CD4-positive, alpha-beta memory T cell (primary cell): ENCODE measurements at regions of chr18 and their contacts with region 1.

Region 1: GRCh38 chr18:29351171-29351570 is 1174.2 kb upstream of the CDH2 start:
- DNase-seq: no peak
- H3K4me3 ChIP-seq: no peak overlapping the region
- H3K4me3 Mint-ChIP-seq: no peak overlapping the region
- H3K27ac ChIP-seq: no peak overlapping the region
- H3K27ac Mint-ChIP-seq: no peak overlapping the region
- H3K4me1 ChIP-seq: no peaks in the 10 kb centered on the region
- H3K4me1 Mint-ChIP-seq: no peaks in the 10 kb centered on the region
- H3K27me3 ChIP-seq: no peaks in the 10 kb centered on the region
- H3K27me3 Mint-ChIP-seq: no peaks in the 10 kb centered on the region

Region 2: DNA sequence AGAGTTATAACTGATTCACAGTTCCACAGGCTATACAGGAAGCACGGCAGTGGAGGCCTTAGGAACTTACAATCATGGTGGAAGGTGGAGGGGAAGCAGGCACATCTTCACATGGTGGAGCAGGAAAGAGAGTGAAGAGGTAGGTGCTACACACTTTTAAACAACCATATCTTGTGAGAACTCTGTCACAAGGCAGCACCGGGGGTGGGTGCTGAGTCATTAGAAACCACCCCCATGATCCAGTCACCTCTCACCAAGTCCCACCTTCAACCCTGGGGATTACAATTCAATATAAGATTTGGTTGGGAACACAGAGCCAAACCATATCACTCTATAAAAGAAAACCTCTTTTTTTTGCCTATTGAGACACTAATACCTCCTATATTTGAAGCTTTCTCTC is 65.7 kb before region 1 on chr18:
- CTCF ChIA-PET with region 1: no interaction called
- POLR2A ChIA-PET with region 1: no interaction called
- intact Hi-C with region 1: loop called (anchors 10 kb)
- DNase-seq: no peak
- H3K4me3 ChIP-seq: no peak overlapping the region
- H3K4me3 Mint-ChIP-seq: no peak overlapping the region
- H3K27ac ChIP-seq: no peak overlapping the region
- H3K27ac Mint-ChIP-seq: no peak overlapping the region
- H3K4me1 ChIP-seq: no peaks in the 10 kb centered on the region
- H3K4me1 Mint-ChIP-seq: no peaks in the 10 kb centered on the region
- H3K27me3 ChIP-seq: no peaks in the 10 kb centered on the region
- H3K27me3 Mint-ChIP-seq: no peaks in the 10 kb centered on the region

Region 3: GRCh38 chr18:29418136-29418535 is 67.0 kb after region 1 on chr18:
- CTCF ChIA-PET with region 1: no interaction called
- POLR2A ChIA-PET with region 1: no interaction called
- intact Hi-C with region 1: no loop called
- DNase-seq: no peak
- H3K4me3 ChIP-seq: no peak overlapping the region
- H3K4me3 Mint-ChIP-seq: no peak overlapping the region
- H3K27ac ChIP-seq: no peak overlapping the region
- H3K27ac Mint-ChIP-seq: no peak overlapping the region
- H3K4me1 ChIP-seq: no peaks in the 10 kb centered on the region
- H3K4me1 Mint-ChIP-seq: no peaks in the 10 kb centered on the region
- H3K27me3 ChIP-seq: no peaks in the 10 kb centered on the region
- H3K27me3 Mint-ChIP-seq: no peaks in the 10 kb centered on the region

Region 4: DNA sequence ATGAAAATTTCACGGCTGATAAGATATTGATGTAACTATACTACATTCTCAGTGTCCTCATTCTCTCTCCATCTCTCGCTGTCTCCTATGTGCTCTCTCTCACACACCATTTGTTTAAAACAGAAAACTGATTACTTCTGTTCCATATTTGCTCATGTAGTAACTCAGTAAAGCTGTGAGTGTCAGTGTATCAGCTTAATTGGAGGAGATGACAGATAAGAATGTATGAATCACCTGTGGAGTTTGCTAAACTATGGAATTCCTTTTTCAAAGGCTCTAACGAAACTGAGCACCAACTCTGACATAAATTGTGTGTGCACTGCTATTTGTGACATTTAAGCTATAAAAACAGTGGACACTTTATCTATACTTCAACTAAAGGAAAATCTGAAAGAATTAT is 611.4 kb after region 1 on chr18:
- CTCF ChIA-PET with region 1: no interaction called
- POLR2A ChIA-PET with region 1: no interaction called
- intact Hi-C with region 1: no loop called
- DNase-seq: no peak
- H3K4me3 ChIP-seq: no peak overlapping the region
- H3K4me3 Mint-ChIP-seq: no peak overlapping the region
- H3K27ac ChIP-seq: no peak overlapping the region
- H3K27ac Mint-ChIP-seq: no peak overlapping the region
- H3K4me1 ChIP-seq: no peaks in the 10 kb centered on the region
- H3K4me1 Mint-ChIP-seq: no peaks in the 10 kb centered on the region
- H3K27me3 ChIP-seq: no peaks in the 10 kb centered on the region
- H3K27me3 Mint-ChIP-seq: no peaks in the 10 kb centered on the region